ENCODE measurements at regions of chr6 and their contacts with region 1.

Region 1: GRCh38 chr6:36678518-36679027 is at the start of gene CDKN1A:
- H3K4me3 ChIP-seq: peak within 1 kb of the TSS; percentile 76
- H3K27ac ChIP-seq: peak within 1 kb of the TSS; percentile 89
- H3K4me1 ChIP-seq: peaks cover 19% of the 10 kb centered on the region
- CTCF ChIP-seq: 0 out of 2 replicates have a peak, but pooled peaks have one; percentile 7

Region 2: GRCh38 chr6:36615018-36615761 is 63.4 kb before region 1 on chr6:
- CTCF ChIA-PET with region 1: interaction called, 47 read pairs
- POLR2A ChIA-PET with region 1: interaction called, 3 read pairs
- H3K4me3 ChIP-seq: no peak overlapping the region
- H3K27ac ChIP-seq: no peak overlapping the region
- H3K4me1 ChIP-seq: no peaks in the 10 kb centered on the region
- CTCF ChIP-seq: peak; percentile 83

Region 3: GRCh38 chr6:36642913-36643817 is 35.4 kb before region 1 on chr6:
- CTCF ChIA-PET with region 1: no interaction called
- POLR2A ChIA-PET with region 1: interaction called, 14 read pairs
- H3K4me3 ChIP-seq: no peak overlapping the region
- H3K27ac ChIP-seq: no peak overlapping the region
- H3K4me1 ChIP-seq: peaks cover 10% of the 10 kb centered on the region
- CTCF ChIP-seq: no peak

Region 4: DNA sequence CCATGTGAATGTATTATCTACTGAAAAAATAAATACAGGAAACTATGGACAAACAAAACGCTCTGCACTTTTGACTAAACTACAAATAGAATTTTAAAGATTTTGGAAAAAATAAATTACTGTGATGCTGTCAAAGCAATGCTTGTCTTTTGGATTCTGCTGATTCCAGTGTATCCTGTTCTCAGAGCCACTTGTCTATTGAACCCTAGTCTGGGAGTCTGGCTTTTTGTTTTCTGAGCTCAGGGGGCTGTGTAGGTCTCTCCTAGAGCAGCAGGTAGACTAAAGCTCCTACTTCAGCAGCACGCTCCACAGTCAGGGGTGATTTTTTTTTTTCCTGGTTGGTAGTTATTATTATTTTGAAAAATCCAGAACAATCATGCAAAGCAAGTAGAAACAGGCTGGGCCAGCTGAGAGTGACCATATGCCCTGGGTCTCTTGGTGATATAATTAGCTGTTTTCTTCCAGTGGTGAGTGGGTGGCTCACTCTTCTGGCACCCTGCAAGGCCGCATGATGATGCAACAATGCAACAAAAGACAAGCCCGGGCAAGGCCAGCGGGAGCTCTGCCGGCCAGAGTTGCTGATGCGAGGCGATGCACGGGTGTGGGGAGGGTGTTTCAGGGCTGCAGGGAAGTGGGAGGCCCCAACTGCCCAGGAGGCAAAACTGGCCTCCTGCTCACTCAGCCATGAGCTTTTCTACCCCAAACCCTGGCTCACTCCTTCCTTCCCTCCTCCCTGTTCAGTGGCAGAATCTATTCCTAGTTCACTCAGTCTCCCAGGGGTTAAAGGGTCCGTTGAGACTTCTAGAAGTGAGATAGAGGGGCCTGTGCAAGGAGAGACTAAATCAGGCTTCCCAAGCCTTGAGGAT is 11.6 kb before region 1 on chr6:
- CTCF ChIA-PET with region 1: interaction called, 9 read pairs
- POLR2A ChIA-PET with region 1: interaction called, 143 read pairs
- H3K4me3 ChIP-seq: no peak overlapping the region
- H3K27ac ChIP-seq: peak overlapping the region; percentile 80
- H3K4me1 ChIP-seq: peaks cover 15% of the 10 kb centered on the region
- CTCF ChIP-seq: peak; percentile 19; the same call in 1 of the 2 replicates

Region 5: GRCh38 chr6:36724514-36725390 is 46.2 kb after region 1 on chr6:
- CTCF ChIA-PET with region 1: interaction called, 11 read pairs
- POLR2A ChIA-PET with region 1: interaction called, 8 read pairs
- H3K4me3 ChIP-seq: no peak overlapping the region
- H3K27ac ChIP-seq: no peak overlapping the region
- H3K4me1 ChIP-seq: no peaks in the 10 kb centered on the region
- CTCF ChIP-seq: peak; percentile 77

Region 6: GRCh38 chr6:36874443-36875249 is 196.1 kb after region 1 on chr6 and contains the start of gene PPIL1:
- CTCF ChIA-PET with region 1: no interaction called
- POLR2A ChIA-PET with region 1: interaction called, 10 read pairs
- H3K4me3 ChIP-seq: peak within 1 kb of the TSS; percentile 86
- H3K27ac ChIP-seq: peak within 1 kb of the TSS; percentile 99
- H3K4me1 ChIP-seq: no peaks in the 10 kb centered on the region
- CTCF ChIP-seq: peak; percentile 74

Measured in HEK293 (cell line).